ENCODE measurements at regions of chr7 and their contacts with region 1.

Region 1: DNA sequence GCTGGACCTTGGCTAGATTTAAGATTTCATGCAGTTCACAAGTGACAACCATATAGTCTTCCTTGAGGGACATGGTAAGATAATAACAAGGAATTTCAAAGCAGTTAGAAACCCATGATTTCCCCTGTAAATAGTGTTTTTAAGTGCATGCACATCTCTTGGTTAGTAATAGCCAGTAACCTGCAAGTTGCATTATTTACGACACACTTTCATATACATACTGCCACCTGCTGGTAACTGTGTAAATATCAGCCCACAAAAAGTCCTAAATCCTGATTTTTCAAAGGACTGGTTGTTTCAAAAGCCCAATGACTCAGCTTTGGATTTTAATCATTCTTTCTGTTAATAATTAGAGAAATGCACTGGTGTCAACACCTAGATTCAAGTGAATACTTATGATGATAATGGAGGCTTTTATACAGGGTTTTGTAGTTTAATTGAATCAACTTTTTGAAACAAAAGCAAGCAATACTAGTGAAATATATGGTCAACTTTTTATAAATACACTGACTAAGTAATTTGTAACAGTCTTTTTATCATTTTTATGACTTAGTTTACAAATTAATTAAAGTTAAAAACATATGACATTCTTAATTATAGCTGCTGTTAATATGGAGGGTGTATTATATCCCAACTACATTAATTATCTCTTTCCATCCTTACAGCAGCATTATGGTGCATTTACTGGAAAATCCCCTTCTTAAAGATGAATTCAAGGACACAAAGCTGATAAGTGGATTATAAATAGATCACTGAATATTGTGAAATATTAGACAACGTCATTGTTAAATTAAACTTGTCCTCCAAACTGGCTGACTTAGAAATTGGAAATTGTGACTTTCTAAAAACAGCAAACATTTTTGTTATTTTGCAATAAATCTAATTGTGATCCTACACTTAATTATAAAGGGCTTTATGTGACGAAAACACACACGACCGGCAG is 367.7 kb upstream of the SEMA3D start:
- DNase-seq: peak; percentile 82
- ATAC-seq: peak; percentile 57
- H3K4me3 ChIP-seq: no peak overlapping the region
- H3K27ac ChIP-seq: no peak overlapping the region
- H3K4me1 ChIP-seq: no peaks in the 10 kb centered on the region
- H3K27me3 ChIP-seq: no peaks in the 10 kb centered on the region
- CTCF ChIP-seq: peak; percentile 79

Region 2: DNA sequence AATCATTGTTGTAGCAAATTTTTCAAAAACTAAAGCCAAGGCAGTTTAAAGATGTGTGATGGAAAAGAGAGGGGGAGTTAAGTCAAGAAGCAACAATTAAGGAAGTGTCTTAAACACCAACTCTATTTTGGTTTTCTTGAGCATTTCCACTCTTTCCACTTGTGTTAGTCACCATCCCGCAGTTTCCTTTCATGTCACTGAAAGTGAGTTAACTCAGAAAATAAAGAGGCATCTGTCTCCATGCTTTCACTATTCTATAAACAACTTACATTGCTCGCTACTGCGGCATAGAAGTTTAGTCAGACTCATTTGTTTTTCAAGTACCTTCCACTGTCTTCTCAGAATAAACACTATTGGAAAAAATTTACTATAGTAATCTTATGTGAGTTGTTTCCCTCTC is 82.8 kb before region 1 on chr7:
- CTCF ChIA-PET with region 1: no interaction called
- POLR2A ChIA-PET with region 1: no interaction called
- intact Hi-C with region 1: loop called (anchors 2 kb)
- DNase-seq: no peak
- ATAC-seq: no peak
- H3K4me3 ChIP-seq: no peak overlapping the region
- H3K27ac ChIP-seq: no peak overlapping the region
- H3K4me1 ChIP-seq: peaks cover 10% of the 10 kb centered on the region; the same call in 1 of the 2 replicates
- H3K27me3 ChIP-seq: no peaks in the 10 kb centered on the region
- CTCF ChIP-seq: no peak

Region 3: DNA sequence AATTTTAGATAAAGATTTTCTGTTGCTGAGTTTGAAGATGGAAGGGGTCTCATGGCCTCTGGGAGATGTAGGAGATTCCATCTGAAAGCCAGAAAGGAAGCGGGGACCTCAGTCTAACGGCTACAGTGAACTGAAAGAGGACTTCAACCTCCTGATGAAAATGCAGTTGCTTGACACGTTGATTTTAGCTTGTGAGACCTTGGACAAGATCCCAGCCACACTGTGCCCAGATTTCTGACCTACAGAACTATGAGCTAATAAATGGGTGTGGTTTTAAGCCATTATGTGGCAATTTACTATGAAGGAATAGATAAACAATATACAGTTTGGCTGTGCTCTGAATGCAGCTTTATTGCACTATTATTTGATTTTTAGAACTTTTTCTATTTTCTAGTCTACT is 25.3 kb before region 1 on chr7:
- CTCF ChIA-PET with region 1: no interaction called
- POLR2A ChIA-PET with region 1: no interaction called
- intact Hi-C with region 1: no loop called
- DNase-seq: no peak
- ATAC-seq: no peak
- H3K4me3 ChIP-seq: no peak overlapping the region
- H3K27ac ChIP-seq: no peak overlapping the region
- H3K4me1 ChIP-seq: 0 out of 2 replicates have a peak, but pooled peaks cover 7% of the 10 kb centered on the region
- H3K27me3 ChIP-seq: no peaks in the 10 kb centered on the region
- CTCF ChIP-seq: no peak

Measured in PC-3 (cell line).